Common myeloid progenitor, CD34-positive (primary cell): ENCODE measurements at regions of chr20 and their contacts with region 1.

Region 1: DNA sequence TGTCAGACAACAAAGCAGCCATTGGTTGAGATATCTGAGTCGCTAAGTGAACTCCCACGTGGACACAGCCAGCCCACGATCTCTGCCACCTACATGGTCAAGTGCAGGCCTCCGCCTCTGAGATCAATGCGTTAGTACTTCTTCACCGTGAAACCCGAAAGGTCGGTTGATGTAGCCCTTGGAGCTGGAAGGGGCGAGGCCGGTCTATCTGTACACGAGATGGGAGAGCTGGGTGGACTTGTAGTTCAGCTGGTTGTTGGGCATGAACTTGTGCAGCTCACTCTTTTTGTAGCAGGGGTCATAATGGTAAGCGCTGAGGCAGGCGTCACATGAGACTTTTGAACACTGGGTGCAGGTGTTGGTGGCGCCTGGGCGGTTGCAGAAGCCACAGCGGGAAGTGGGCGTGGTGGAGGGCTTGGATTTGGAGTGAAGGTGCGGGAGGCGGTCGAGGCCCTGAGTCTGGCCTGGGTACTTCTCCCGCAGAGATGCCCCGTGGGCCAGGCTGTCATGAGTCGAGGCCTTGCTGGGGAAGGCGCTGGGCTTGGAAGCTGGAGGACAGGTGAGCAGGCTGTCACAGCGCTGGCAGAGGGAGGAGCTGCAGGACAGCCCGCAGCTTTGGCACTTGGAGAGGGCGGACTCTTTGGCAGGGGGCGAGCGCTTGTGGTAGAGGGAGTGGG is 9.8 kb downstream of the SPATA2 start:
- DNase-seq: no peak
- H3K4me3 ChIP-seq: no peak overlapping the region
- H3K27ac ChIP-seq: no peak overlapping the region
- H3K4me1 ChIP-seq: no peaks in the 10 kb centered on the region
- H3K27me3 ChIP-seq: no peaks in the 10 kb centered on the region

Region 2: GRCh38 chr20:49888345-49888966 is 17.1 kb before region 1 on chr20:
- CTCF ChIA-PET with region 1: interaction called, 15 read pairs
- POLR2A ChIA-PET with region 1: no interaction called
- DNase-seq: peak; percentile 50 to 74 (median 70)
- H3K4me3 ChIP-seq: no peak overlapping the region
- H3K27ac ChIP-seq: no peak overlapping the region
- H3K4me1 ChIP-seq: peaks cover 0 to 34% (median 12%) of the 10 kb centered on the region in 4 experiments
- H3K27me3 ChIP-seq: no peaks in the 10 kb centered on the region

Region 3: GRCh38 chr20:49979030-49979832 is 73.7 kb after region 1 on chr20:
- CTCF ChIA-PET with region 1: no interaction called
- POLR2A ChIA-PET with region 1: no interaction called
- DNase-seq: peak; percentile 48 to 79 (median 74)
- H3K4me3 ChIP-seq: peak overlapping the region in 4 of 7 experiments; percentile 23 to 59 (median 54)
- H3K27ac ChIP-seq: no peak overlapping the region
- H3K4me1 ChIP-seq: peaks cover 0 to 40% (median 30%) of the 10 kb centered on the region in 4 experiments
- H3K27me3 ChIP-seq: no peaks in the 10 kb centered on the region

Region 4: GRCh38 chr20:50027611-50028105 is 122.1 kb after region 1 on chr20:
- CTCF ChIA-PET with region 1: no interaction called
- POLR2A ChIA-PET with region 1: no interaction called
- DNase-seq: no peak
- H3K4me3 ChIP-seq: no peak overlapping the region
- H3K27ac ChIP-seq: no peak overlapping the region
- H3K4me1 ChIP-seq: peaks cover 0 to 13% (median 0%) of the 10 kb centered on the region in 4 experiments
- H3K27me3 ChIP-seq: no peaks in the 10 kb centered on the region